ENCODE measurements at regions of chr6 and their contacts with region 1.

Region 1: DNA sequence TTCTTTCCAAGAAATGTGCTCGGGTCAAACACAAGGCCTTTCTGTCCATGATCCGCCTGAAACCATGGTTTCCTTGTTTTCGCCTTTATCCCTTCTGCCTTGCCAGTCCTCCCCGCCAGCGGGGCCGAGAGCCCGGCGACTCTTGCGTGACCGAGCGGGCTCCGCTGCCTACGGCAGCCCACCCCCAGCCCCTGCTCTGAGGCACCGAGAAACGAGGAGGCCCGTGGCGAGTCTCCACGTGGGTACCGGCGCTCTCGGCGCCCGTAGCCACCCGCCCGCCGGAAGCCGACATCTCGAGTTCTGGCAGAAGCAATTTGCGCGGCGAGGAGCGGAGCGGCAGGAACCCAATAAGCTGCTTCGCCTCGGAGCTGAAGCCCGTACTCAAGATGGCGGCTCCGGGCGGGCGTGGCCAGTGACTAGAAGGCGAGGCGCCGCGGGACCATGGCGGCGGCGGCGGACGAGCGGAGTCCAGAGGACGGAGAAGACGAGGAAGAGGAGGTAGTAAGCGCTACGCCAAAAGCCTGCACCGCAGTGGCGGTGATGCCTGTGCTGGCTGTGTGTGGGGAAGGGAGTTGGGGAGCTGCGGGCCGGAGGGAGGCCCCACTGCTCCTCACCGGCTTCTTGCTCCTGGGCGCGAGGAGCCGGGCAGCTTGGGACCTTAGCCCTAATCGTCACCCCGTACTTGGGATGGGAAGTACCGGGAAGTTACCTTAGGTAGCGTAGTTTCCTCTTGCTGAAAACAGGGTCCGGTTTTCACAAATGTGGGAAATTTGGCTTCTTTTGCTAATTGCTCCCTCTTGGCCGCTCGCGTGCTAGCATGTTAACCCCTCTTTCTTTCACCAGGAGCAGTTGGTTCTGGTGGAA is at the start of gene GTF3C6:
- DNase-seq: peak; percentile 92
- H3K4me3 Mint-ChIP-seq: peak within 1 kb of the TSS; percentile 99
- H3K27ac Mint-ChIP-seq: peak within 1 kb of the TSS; percentile 100
- H3K4me1 Mint-ChIP-seq: no peaks in the 10 kb centered on the region
- H3K27me3 Mint-ChIP-seq: no peaks in the 10 kb centered on the region
- CTCF ChIP-seq: no peak
- total RNA-seq, gene GTF3C6: 96.8 and 96.9 TPM in 2 replicates

Region 2: GRCh38 chr6:110971468-110971867 is 12.9 kb after region 1 on chr6:
- CTCF ChIA-PET with region 1: interaction called, 9 read pairs
- POLR2A ChIA-PET with region 1: interaction called, 27 read pairs
- intact Hi-C with region 1: no loop called
- DNase-seq: no peak
- H3K4me3 Mint-ChIP-seq: no peak overlapping the region
- H3K27ac Mint-ChIP-seq: no peak overlapping the region
- H3K4me1 Mint-ChIP-seq: peaks cover 7% of the 10 kb centered on the region
- H3K27me3 Mint-ChIP-seq: no peaks in the 10 kb centered on the region
- CTCF ChIP-seq: no peak

Region 3: DNA sequence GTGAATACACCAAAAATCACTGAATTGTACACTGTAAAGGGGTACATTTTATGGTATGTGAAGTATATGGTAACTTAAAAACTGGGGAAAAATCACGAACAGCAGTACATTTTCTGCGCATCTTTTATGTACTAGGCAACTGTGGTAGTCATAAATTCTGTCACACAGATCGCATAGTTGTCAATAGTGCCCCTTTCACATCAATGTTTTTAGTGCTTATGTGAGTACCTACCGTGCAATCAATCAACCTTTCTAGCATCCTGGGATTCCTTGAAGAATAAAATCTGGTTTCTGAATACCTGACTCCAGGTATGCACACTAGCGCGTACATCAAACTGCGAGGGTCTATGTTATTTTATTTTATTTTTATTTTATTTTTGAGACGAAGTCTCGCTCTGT is 22.6 kb after region 1 on chr6:
- CTCF ChIA-PET with region 1: interaction called, 5 read pairs
- POLR2A ChIA-PET with region 1: interaction called, 36 read pairs
- intact Hi-C with region 1: loop called (anchors 2 kb)
- DNase-seq: no peak
- H3K4me3 Mint-ChIP-seq: peak overlapping the region; percentile 99
- H3K27ac Mint-ChIP-seq: peak overlapping the region; percentile 100
- H3K4me1 Mint-ChIP-seq: peaks cover 16% of the 10 kb centered on the region
- H3K27me3 Mint-ChIP-seq: no peaks in the 10 kb centered on the region
- CTCF ChIP-seq: no peak

Measured in MCF 10A (cell line).